GM10248 (cell line): ENCODE measurements at regions of chr12 and their contacts with region 1.

Region 1: GRCh38 chr12:6688999-6689882 is at the start of gene ZNF384:
- DNase-seq: peak; percentile 96
- CTCF ChIP-seq: peak; percentile 2

Region 2: DNA sequence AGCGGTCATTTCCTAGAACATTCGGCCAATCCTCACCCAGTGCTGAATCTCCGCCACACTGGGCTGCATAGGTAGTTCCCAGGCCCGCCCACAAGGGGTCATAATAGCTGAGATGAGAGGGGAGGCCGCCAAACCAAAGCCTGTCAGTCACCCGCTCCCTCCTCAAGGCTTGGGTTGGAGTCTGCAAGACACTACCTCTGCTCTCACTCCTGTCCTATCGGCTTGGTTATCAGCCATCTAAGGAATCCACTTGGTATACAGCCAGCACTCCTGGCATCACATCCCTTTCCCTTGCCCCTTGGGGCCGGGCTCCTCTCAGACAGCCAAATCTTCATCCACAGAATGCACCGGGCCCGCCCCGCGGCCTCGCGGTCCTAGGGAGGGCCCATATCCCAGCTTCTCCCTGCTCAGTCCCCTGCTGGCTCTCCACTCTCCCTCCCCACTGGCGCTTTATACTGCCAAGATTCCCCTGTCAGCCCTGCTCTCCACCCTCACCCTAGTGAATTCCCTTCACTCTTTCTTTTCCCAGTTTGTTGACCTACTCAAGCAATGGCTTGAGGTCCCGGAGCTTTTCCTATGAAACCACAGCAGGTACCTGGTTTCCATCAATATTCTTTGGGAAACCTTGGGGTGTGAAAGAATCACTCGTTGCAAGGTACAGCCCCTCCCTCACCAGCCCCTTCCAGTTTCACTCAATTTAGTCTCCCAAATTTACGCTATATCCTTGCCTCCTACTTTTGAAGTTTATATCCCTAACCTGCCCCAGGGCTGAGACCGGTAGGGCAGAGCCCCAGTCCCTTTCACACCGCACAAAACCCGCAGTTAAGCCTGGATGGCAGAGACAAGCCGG is 134.8 kb before region 1 on chr12:
- CTCF ChIA-PET with region 1: interaction called, 9 read pairs
- POLR2A ChIA-PET with region 1: interaction called, 15 read pairs
- DNase-seq: peak; percentile 88
- CTCF ChIP-seq: peak; percentile 77

Region 3: DNA sequence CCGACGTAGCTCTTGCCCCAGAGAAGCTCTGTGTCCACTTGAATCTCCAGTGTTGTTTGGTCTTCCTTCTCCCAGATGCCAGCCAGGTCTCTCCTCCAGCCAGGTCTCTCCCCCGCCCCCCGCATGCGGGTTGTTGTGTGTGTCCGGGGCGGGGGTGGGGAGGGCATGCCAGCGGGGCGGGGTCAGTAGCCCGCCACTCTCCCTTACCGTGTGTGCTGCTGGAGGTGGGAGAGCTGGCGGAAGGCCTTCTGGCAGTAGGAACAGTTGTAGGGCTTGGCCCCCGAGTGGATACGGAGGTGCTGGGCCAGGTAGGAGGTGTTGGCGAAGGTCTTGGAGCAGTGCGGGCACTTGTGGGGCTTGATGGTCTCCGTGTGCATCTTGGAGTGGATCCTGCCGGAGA is 17.1 kb before region 1 on chr12:
- CTCF ChIA-PET with region 1: interaction called, 10 read pairs
- POLR2A ChIA-PET with region 1: interaction called, 5 read pairs
- DNase-seq: no peak
- CTCF ChIP-seq: no peak

Region 4: GRCh38 chr12:6937481-6938297 is 248.4 kb after region 1 on chr12:
- CTCF ChIA-PET with region 1: no interaction called
- POLR2A ChIA-PET with region 1: no interaction called
- DNase-seq: peak; percentile 87
- CTCF ChIP-seq: peak; percentile 98